ENCODE measurements at regions of chr7 and their contacts with region 1.

Region 1: GRCh38 chr7:23247603-23248335 is 1.2 kb downstream of the GPNMB start:
- DNase-seq: peak; percentile 82

Region 2: GRCh38 chr7:23181684-23182553 is 65.8 kb before region 1 on chr7 and contains the start of gene NUP42:
- intact Hi-C with region 1: loop called (anchors 5 kb)
- DNase-seq: peak; percentile 97
- total RNA-seq, gene NUP42: 24.0 TPM

Region 3: DNA sequence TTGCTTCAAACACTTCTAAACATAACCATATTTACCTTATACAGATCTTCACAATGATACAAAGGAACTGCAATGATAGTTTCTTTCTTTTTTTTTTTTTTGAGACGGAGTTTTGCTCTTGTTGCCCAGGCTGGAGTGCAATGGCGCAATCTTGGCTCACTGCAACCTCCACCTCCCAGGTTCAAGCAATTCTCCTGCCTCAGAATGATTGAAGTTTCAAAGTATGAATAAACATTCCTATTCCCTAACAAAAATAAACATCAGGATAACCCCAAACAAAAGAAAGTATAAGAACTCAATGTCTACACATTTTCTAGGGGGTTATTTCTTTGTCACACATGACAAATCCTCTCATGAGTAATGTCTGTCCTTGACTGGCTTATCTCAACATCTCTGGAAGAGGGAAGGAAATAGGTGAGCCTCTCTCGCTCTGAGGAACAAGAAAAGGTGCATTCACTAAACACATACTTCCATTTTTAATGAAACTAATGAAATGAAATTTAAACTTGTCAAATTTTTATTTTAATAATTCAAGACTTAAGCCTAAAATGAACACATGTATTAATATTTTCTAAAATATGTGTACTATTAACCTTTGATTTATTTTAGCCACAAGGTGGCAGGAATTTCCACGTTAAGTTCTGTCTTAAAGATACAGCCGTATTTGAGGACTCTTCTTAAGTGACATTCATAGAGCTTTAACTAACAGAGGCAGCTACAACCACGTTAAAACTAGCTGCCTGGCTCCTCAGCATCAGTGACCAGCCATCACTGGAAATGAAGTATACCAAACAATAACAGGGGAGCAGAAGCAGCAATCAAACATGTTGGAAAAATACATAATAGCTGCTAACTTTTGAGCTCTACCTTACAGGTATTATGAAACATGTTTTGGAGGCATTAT is 109.7 kb after region 1 on chr7:
- intact Hi-C with region 1: no loop called
- DNase-seq: no peak

Measured in cardiac septum (tissue), 1 donor.